Sciatic nerve (tissue), 2 donors: ENCODE measurements at regions of chrX and their contacts with region 1.

Region 1: GRCh38 chrX:4588893-4589292 is 875.4 kb upstream of the PRKX start:
- DNase-seq: no peak
- ATAC-seq: no peak

Region 2: GRCh38 chrX:4547213-4547836 is 41.6 kb before region 1 on chrX:
- intact Hi-C with region 1: no loop called
- DNase-seq: peak; percentile 69
- ATAC-seq: no peak

Region 3: DNA sequence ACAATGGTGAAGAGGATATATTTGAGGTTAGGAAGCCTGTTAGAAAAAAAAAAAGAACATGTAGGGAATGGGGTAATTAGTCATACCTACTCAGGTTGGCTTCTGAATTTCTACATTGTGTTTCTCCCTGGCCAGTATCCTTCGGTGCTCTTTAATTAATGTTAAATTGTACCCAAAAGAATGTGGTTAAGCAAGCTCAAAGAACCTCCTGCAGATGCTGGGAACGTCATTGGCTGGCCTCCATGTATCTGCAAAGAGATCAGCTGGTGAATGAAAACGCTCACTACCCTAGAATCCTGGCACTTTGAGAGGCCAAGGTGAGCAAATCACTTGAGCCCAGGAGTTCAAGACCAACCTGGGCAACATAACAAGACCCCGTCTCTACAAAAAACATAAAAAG is 66.9 kb after region 1 on chrX:
- intact Hi-C with region 1: loop called (anchors 2 kb)
- DNase-seq: no peak
- ATAC-seq: no peak

Region 4: DNA sequence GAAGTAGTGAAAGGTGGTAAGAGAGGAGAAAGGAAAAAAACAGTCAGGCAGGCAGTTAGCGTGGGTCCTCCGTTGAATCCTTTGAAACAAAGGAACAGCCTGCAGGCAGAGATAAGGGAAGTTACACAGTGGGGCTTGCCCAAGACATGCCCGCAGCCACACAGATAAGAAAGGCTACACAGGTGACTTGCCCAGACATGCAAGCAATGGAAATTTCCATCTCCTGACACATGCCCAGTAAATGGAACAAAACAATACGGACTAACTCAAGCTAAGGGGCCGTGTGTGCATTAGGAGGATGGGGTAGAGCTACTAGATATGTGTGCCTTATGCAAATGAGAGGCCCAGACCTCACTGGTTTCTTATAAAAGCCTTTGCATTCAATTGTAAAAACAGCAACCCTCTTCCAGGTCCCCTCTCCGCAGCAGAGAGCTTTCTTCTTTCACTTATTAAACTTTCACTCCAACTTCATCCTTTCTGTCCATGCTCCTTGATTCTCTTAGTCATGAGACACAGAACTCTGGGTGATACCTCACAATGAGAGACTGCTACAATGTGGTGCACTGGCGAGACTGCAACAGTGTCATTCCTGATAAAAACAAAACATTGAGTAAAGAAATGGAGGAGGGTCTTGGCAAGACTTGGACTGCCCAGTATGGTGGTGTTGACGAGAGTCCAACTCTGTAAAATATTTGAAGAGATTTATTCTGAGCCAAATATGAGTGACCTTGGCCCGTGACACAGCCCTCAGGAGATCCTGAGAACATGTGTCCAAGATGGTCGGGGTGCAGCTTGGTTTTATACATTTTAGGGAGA is 121.9 kb after region 1 on chrX:
- intact Hi-C with region 1: no loop called
- DNase-seq: no peak
- ATAC-seq: no peak

Region 5: GRCh38 chrX:4805502-4805901 is 216.6 kb after region 1 on chrX:
- intact Hi-C with region 1: no loop called
- DNase-seq: no peak
- ATAC-seq: no peak

Region 6: GRCh38 chrX:6558979-6559378 is 1970.1 kb after region 1 on chrX:
- intact Hi-C with region 1: no loop called
- DNase-seq: no peak
- ATAC-seq: no peak